HepG2 (cell line): ENCODE measurements at regions of chr2 and their contacts with region 1.

Region 1: DNA sequence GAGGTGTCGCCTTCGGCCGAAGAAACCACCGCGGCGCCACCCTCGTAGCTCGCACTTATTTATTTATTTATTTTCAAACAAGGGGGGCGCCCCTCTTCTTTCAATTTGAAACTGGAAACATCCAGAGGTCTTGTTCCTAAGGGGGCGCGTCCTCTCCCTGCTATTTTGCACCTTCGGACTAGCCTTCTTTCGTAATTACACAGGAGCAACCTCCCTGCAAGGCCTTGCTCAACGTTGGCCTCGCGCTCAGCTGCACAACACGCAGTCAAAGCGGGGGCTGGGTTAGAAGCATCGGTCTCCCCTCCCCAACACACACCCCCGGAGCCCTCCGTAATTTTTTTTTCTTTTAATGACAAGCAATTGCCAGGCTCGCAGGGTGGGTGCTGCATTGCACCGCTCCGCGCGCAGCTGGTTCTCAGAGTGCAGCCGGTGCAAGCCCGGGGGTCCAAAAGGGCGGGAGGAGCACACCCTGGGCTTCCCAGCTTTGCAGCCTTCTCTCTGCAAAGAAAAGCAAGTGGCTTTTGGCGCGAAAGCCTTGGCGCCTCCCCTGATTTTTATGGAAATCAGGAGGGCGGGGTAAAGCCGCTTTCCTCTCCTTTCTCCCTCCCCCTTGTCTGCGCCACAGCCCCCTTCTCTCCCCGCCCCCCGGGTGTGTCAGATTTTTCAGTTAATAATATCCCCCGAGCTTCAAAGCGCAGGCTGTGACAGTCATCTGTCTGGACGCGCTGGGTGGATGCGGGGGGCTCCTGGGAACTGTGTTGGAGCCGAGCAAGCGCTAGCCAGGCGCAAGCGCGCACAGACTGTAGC is at the start of gene MYCN:
- DNase-seq: peak; percentile 41
- ATAC-seq: peak; percentile 68
- H3K4me3 ChIP-seq: peak within 1 kb of the TSS in 1 of 3 experiments; percentile 37; a peak in 1 of 6 replicates
- H3K27ac ChIP-seq: no peak within 1 kb of the TSS
- H3K4me1 ChIP-seq: peaks cover 11% of the 10 kb centered on the region; the same call in 1 of the 2 replicates
- H3K27me3 ChIP-seq: peaks cover 23 to 49% of the 10 kb centered on the region in 2 experiments
- CTCF ChIP-seq: no peak; the same call in 1 of the 2 replicates
- EP300 ChIP-seq: no peak
- POLR2A ChIP-seq: no peak
- RAD21 ChIP-seq: peak; percentile 95
- total RNA-seq, gene MYCN: not detected in 2 replicates

Region 2: GRCh38 chr2:15636972-15637785 is 302.9 kb before region 1 on chr2:
- CTCF ChIA-PET with region 1: no interaction called
- POLR2A ChIA-PET with region 1: no interaction called
- in situ Hi-C with region 1: no loop called
- intact Hi-C with region 1: loop called (anchors 1 kb)
- DNase-seq: peak; percentile 71
- ATAC-seq: peak; percentile 84
- H3K4me3 ChIP-seq: no peak overlapping the region
- H3K27ac ChIP-seq: peak overlapping the region; percentile 2
- H3K4me1 ChIP-seq: peaks cover 37% of the 10 kb centered on the region
- H3K27me3 ChIP-seq: no peaks in the 10 kb centered on the region
- CTCF ChIP-seq: peak; percentile 91
- EP300 ChIP-seq: no peak
- POLR2A ChIP-seq: no peak
- RAD21 ChIP-seq: peak; percentile 94

Region 3: DNA sequence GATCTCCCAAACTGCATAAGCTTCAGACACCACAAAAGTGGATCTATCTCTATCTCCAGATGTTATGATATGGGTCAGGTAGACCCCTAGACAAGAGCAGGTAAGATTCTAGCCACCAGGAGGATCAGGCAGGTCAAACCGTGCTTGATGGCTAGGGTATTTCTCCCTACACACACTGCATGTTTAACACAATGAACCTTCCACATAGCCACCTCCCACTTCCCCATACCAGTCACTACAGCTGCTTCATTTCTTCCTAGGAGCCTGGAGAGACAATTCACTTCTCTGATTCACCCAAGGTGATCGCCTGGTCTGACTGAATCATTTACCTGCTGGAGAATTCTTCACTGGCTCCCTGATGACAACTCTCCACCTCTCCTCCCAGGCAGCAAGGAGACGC is 65.7 kb before region 1 on chr2:
- CTCF ChIA-PET with region 1: no interaction called
- POLR2A ChIA-PET with region 1: no interaction called
- in situ Hi-C with region 1: no loop called
- intact Hi-C with region 1: no loop called
- DNase-seq: no peak
- ATAC-seq: peak; percentile 57
- H3K4me3 ChIP-seq: no peak overlapping the region
- H3K27ac ChIP-seq: no peak overlapping the region
- H3K4me1 ChIP-seq: peaks cover 7% of the 10 kb centered on the region; the same call in 1 of the 2 replicates
- H3K27me3 ChIP-seq: 0 out of 5 replicates have a peak, but pooled peaks cover 0 to 3% of the 10 kb centered on the region in 2 experiments
- CTCF ChIP-seq: no peak
- EP300 ChIP-seq: no peak
- POLR2A ChIP-seq: no peak
- RAD21 ChIP-seq: no peak

Region 4: DNA sequence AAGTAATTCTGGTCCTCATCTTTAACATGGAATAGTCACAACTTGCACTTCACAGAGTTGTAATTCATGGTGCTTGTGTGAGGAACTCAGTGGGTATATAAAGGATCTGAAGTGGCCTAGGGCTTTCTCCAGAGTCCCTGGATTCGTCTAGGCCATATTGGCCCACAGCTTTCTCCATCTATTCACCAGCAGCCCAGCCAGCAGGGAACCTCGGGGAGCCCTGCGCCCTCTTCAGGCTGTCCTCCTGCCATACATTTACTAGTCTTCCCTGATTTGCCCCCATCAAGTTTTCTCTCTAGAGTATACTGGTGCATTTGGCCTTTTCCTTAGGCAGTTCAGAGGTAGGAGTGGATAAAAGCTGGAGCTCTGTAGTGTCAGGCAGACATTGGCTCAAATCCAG is 278.6 kb after region 1 on chr2:
- CTCF ChIA-PET with region 1: interaction called, 19 read pairs
- POLR2A ChIA-PET with region 1: no interaction called
- in situ Hi-C with region 1: loop called (anchors 5 kb)
- intact Hi-C with region 1: loop called (anchors 1 kb)
- DNase-seq: peak; percentile 33
- ATAC-seq: peak; percentile 94
- H3K4me3 ChIP-seq: no peak overlapping the region
- H3K27ac ChIP-seq: no peak overlapping the region
- H3K4me1 ChIP-seq: no peaks in the 10 kb centered on the region
- H3K27me3 ChIP-seq: peaks cover 0 to 17% of the 10 kb centered on the region in 2 experiments; a peak in 3 of 5 replicates
- CTCF ChIP-seq: peak; percentile 75
- EP300 ChIP-seq: no peak
- POLR2A ChIP-seq: no peak
- RAD21 ChIP-seq: peak; percentile 78

Region 5: GRCh38 chr2:16487686-16488085 is 547.6 kb after region 1 on chr2:
- CTCF ChIA-PET with region 1: interaction called, 10 read pairs
- POLR2A ChIA-PET with region 1: no interaction called
- in situ Hi-C with region 1: loop called (anchors 10 kb)
- intact Hi-C with region 1: no loop called
- DNase-seq: peak; percentile 34
- ATAC-seq: no peak
- H3K4me3 ChIP-seq: no peak overlapping the region
- H3K27ac ChIP-seq: no peak overlapping the region
- H3K4me1 ChIP-seq: no peaks in the 10 kb centered on the region
- H3K27me3 ChIP-seq: no peaks in the 10 kb centered on the region; a peak in 1 of 5 replicates
- CTCF ChIP-seq: peak; percentile 71
- EP300 ChIP-seq: no peak
- POLR2A ChIP-seq: no peak
- RAD21 ChIP-seq: no peak

Region 6: GRCh38 chr2:16608661-16609643 is 668.9 kb after region 1 on chr2:
- CTCF ChIA-PET with region 1: interaction called, 11 read pairs
- POLR2A ChIA-PET with region 1: no interaction called
- in situ Hi-C with region 1: no loop called
- intact Hi-C with region 1: no loop called
- DNase-seq: peak; percentile 67
- ATAC-seq: peak; percentile 98
- H3K4me3 ChIP-seq: peak overlapping the region; percentile 42 to 70 (median 45)
- H3K27ac ChIP-seq: no peak overlapping the region
- H3K4me1 ChIP-seq: 0 out of 2 replicates have a peak, but pooled peaks cover 4% of the 10 kb centered on the region
- H3K27me3 ChIP-seq: no peaks in the 10 kb centered on the region; a peak in 1 of 5 replicates
- CTCF ChIP-seq: peak; percentile 85
- EP300 ChIP-seq: 0 out of 4 replicates have a peak, but pooled peaks of 1 of the 2 experiments have one; percentile 11
- POLR2A ChIP-seq: no peak
- RAD21 ChIP-seq: peak; percentile 80

Region 7: DNA sequence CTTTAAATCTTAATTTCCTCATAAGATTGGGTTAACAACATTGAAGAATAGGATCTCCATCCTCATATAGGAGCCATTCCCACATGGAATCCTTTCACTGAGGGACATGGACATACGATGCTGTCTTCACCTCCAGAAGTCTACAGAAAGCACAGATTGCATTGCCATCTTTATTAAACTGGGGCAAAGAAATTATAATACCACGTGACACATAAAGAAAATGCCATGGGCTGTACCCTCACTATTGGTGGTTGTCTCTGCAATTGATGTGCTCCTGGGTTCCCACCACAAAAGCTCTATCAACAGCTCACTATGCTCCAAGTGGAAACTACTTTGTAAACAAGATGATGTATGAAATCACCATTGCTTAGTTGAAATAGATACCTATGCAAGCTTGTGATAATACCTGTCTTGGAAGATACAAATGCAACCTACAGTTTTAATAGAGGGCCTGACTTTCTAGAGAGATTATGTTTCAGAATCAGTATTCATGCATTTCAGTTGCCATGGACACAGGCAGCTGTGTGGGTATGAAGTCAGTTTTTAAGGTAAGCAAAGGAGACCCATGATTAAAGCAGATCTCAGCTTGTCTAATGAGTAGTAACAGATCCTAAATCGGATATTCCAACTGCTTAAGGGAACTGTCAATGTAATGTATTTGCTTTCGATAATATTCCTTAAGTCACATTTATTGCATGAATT is 1241.1 kb after region 1 on chr2:
- CTCF ChIA-PET with region 1: no interaction called
- POLR2A ChIA-PET with region 1: no interaction called
- in situ Hi-C with region 1: no loop called
- intact Hi-C with region 1: no loop called
- DNase-seq: no peak
- ATAC-seq: no peak
- H3K4me3 ChIP-seq: no peak overlapping the region
- H3K27ac ChIP-seq: no peak overlapping the region
- H3K4me1 ChIP-seq: no peaks in the 10 kb centered on the region
- H3K27me3 ChIP-seq: no peaks in the 10 kb centered on the region
- CTCF ChIP-seq: no peak
- EP300 ChIP-seq: no peak
- POLR2A ChIP-seq: no peak
- RAD21 ChIP-seq: no peak